Activated CD8-positive, alpha-beta memory T cell treated with anti-CD3 and anti-CD28 coated beads, Interleukin-2, amount 10 ng/mL, durations not matched to agents 7 days and 5 days (primary cell): ENCODE measurements at regions of chr2 and their contacts with region 1.

Region 1: GRCh38 chr2:68721482-68722101 is 13.0 kb upstream of the ARHGAP25 start:
- DNase-seq: peak; percentile 71
- ATAC-seq: peak; percentile 52
- H3K4me3 Mint-ChIP-seq: peak overlapping the region; percentile 46
- H3K27ac Mint-ChIP-seq: peak overlapping the region; percentile 87
- H3K4me1 Mint-ChIP-seq: peaks cover 97% of the 10 kb centered on the region
- H3K27me3 Mint-ChIP-seq: no peaks in the 10 kb centered on the region

Region 2: GRCh38 chr2:68734688-68735525 is 13.3 kb after region 1 on chr2 and contains the start of gene ARHGAP25:
- CTCF ChIA-PET with region 1: interaction called, 35 read pairs
- DNase-seq: peak; percentile 80
- ATAC-seq: peak; percentile 64
- H3K4me3 Mint-ChIP-seq: no peak within 1 kb of the TSS
- H3K27ac Mint-ChIP-seq: no peak within 1 kb of the TSS
- H3K4me1 Mint-ChIP-seq: peaks cover 35% of the 10 kb centered on the region
- H3K27me3 Mint-ChIP-seq: no peaks in the 10 kb centered on the region
- total RNA-seq, gene ARHGAP25: 90.2 to 126 TPM

Region 3: GRCh38 chr2:68766376-68766845 is 44.8 kb after region 1 on chr2:
- CTCF ChIA-PET with region 1: interaction called, 19 read pairs
- DNase-seq: peak; percentile 89
- ATAC-seq: peak; percentile 71
- H3K4me3 Mint-ChIP-seq: peak overlapping the region; percentile 76
- H3K27ac Mint-ChIP-seq: peak overlapping the region; percentile 100
- H3K4me1 Mint-ChIP-seq: peaks cover 94% of the 10 kb centered on the region
- H3K27me3 Mint-ChIP-seq: no peaks in the 10 kb centered on the region